ENCODE measurements at regions of chr1 and their contacts with region 1.

Region 1: GRCh38 chr1:46616277-46617107 is at the start of gene MOB3C:
- DNase-seq: peak; percentile 81
- CTCF ChIP-seq: no peak

Region 2: GRCh38 chr1:46487818-46488218 is 128.7 kb before region 1 on chr1:
- CTCF ChIA-PET with region 1: no interaction called
- POLR2A ChIA-PET with region 1: no interaction called
- DNase-seq: no peak
- CTCF ChIP-seq: no peak

Region 3: DNA sequence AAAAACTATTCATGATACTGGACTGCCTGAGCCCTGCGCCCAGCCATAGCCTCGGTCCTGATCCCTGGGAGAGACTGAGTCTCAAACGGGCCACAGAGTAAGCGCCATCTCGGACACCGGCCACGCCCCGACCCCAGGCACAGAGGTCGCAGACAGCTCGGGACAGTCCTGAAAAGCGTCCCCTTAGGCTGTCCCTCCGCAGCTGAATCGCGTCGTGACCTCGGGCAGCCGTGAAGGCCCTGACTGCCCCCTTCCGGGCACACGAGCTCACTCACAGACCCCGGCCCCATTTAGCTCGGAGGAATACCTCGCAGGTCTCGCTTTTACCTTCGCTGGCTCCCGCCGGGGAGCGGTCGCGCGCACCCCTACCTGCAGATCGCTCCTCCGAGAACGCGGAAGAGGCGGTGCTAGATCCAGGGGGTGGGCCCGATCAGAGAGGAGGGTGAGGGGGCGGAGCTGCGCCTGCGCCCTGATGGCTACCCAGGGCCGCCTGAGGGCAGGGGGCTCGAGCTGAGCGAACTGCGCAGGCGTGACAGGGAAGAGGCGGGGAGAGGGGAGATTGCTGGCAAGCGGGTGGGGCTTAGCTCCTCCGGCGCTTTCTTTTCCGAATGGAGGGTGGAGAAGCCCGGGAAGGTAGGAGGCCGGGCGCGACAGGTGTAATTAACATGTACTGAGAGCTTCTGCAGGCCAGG is 12.5 kb before region 1 on chr1 and contains the start of gene MKNK1:
- CTCF ChIA-PET with region 1: interaction called, 135 read pairs
- POLR2A ChIA-PET with region 1: interaction called, 19 read pairs
- DNase-seq: peak; percentile 100
- CTCF ChIP-seq: no peak

Region 4: DNA sequence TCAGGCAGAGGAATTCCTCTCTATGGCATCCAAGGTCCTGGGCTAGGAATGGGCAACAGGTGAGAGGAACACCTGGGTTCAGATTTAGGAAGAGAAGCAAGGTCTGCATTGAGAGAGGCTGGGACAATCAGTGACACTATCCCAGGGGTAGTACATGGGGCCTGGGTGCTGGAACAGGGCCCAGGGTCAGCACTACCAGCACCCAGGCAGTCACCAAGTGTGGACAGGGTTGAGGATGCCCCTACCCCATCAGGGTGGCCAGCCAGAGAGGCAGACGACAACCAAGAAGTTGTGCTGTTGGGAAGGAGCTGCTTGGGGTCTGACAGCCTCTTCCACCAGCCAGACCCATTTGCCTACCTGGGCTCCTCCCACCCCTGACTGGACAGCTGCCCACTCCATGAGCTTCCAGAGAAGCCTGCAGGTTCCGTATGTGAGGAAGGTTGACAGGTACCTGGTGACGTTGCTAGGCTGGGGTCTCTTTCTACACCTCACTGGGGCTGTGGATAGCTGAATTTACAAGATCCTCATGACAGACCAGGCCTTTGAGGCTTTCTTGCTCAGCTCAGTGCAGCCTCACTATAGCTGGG is 310.9 kb after region 1 on chr1:
- CTCF ChIA-PET with region 1: no interaction called
- POLR2A ChIA-PET with region 1: no interaction called
- DNase-seq: no peak
- CTCF ChIP-seq: no peak